Mammary epithelial cell (primary cell): ENCODE measurements at regions of chr15 and their contacts with region 1.

Region 1: GRCh38 chr15:76190834-76191538 is 120.3 kb downstream of the ETFA start:
- DNase-seq: peak; percentile 61
- H3K4me3 ChIP-seq: peak overlapping the region in 1 of 3 experiments; percentile 52
- H3K27ac ChIP-seq: no peak overlapping the region
- H3K4me1 ChIP-seq: peaks cover 8% of the 10 kb centered on the region
- H3K27me3 ChIP-seq: no peaks in the 10 kb centered on the region
- CTCF ChIP-seq: peak; percentile 85 to 93

Region 2: GRCh38 chr15:76235186-76235826 is 44.3 kb after region 1 on chr15:
- CTCF ChIA-PET with region 1: interaction called, 4 read pairs
- dilution Hi-C with region 1: no loop called
- in situ Hi-C with region 1: no loop called
- intact Hi-C with region 1: loop called (anchors 2 kb)
- DNase-seq: peak; percentile 19
- H3K4me3 ChIP-seq: no peak overlapping the region
- H3K27ac ChIP-seq: no peak overlapping the region
- H3K4me1 ChIP-seq: no peaks in the 10 kb centered on the region
- H3K27me3 ChIP-seq: no peaks in the 10 kb centered on the region
- CTCF ChIP-seq: peak; percentile 29 to 43

Region 3: DNA sequence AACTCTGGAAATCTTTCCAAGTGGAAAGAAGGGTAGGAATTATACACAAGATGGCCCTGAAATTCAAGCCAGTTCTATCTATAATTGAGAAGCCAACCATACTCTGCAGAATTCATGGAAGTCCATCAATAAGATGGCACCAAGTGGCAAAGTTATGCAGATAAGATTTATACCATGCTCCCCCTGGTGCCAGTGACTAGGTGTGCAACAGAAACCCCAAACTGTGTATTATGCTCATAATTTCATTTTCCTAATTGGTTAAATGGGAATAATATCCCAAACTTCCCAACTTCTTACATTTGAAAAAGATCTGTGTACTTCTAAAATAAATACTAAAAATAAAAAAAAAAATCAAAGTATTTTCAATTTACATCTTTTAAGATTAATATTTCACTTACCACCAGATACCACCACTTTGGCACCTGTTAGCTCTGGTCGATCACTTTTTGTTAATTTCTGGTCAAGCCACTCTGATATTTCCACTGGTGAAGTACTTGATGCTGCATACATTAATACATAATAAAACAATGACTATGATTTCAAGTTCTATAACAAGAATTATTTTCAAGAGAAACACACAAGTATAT is 94.3 kb after region 1 on chr15:
- CTCF ChIA-PET with region 1: no interaction called
- dilution Hi-C with region 1: no loop called
- in situ Hi-C with region 1: no loop called
- intact Hi-C with region 1: loop called (anchors 1 kb)
- DNase-seq: peak; percentile 5
- H3K4me3 ChIP-seq: no peak overlapping the region
- H3K27ac ChIP-seq: no peak overlapping the region
- H3K4me1 ChIP-seq: no peaks in the 10 kb centered on the region
- H3K27me3 ChIP-seq: no peaks in the 10 kb centered on the region
- CTCF ChIP-seq: peak; percentile 65 to 69

Region 4: GRCh38 chr15:76330080-76330680 is 139.2 kb after region 1 on chr15:
- CTCF ChIA-PET with region 1: interaction called, 3 read pairs
- dilution Hi-C with region 1: no loop called
- in situ Hi-C with region 1: no loop called
- intact Hi-C with region 1: loop called (anchors 1 kb)
- DNase-seq: peak; percentile 36
- H3K4me3 ChIP-seq: no peak overlapping the region
- H3K27ac ChIP-seq: no peak overlapping the region
- H3K4me1 ChIP-seq: peaks cover 2% of the 10 kb centered on the region
- H3K27me3 ChIP-seq: peaks cover 3% of the 10 kb centered on the region
- CTCF ChIP-seq: peak; percentile 46 to 63

Region 5: DNA sequence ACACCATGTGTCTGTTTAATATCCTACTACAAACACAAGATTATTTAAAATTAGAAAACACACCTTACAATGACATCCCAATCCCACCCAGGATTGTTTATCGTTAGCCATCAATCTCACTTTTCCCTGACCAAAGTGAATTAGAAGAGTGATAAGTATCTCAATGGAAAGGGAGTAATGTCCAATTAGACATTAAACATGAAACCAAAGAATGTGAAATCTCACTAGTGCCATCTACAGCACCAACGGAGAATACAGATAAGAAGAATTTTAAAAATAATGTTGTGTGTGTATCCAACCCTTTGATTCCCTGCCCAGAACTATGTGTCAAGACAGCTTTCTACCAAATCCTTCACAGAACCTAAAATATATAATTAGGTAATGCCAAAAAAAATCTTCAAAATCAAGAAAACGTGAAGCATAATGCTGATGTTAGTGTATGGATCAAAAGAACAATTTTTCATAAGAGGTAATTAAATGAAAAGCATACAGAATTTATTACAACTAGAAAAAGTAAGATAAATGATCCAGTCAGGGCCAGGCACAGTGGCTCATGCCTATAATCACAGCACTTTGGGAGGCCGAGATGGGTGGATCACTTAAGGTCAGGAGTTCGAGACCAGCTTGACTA is 650.0 kb after region 1 on chr15:
- CTCF ChIA-PET with region 1: no interaction called
- dilution Hi-C with region 1: no loop called
- in situ Hi-C with region 1: no loop called
- intact Hi-C with region 1: loop called (anchors 1 kb)
- DNase-seq: peak; percentile 21
- H3K4me3 ChIP-seq: no peak overlapping the region
- H3K27ac ChIP-seq: no peak overlapping the region
- H3K4me1 ChIP-seq: no peaks in the 10 kb centered on the region
- H3K27me3 ChIP-seq: no peaks in the 10 kb centered on the region
- CTCF ChIP-seq: peak; percentile 49 to 67

Region 6: DNA sequence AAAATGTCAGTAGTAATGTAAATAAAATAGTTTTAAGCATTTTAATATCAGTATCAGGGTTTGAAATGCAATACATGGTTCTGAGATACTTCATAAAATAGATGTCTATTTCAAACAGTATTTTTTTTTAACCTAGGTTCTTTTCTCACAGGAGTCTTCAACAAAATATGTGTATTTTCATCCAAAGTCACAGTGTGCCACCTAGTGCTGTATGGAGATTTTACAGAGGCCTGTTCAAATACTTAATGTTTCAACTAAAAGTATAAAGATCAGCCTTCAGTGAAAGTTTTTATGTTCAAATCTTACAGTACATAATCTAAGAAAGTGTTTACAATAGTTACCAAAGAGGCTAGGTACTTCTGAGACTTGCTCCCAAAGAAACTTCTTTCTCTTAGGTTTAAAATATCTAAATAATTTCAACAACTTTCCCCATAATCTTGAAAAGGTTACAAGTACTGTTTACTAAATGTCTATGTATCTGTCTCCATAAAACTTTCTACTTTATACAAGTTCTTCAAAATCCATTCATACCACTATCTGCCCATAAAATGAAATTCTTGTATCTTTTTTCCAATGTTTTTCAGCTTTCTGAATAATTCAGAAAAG is 675.8 kb after region 1 on chr15:
- CTCF ChIA-PET with region 1: no interaction called
- dilution Hi-C with region 1: no loop called
- in situ Hi-C with region 1: no loop called
- intact Hi-C with region 1: loop called (anchors 2 kb)
- DNase-seq: peak; percentile 5
- H3K4me3 ChIP-seq: no peak overlapping the region
- H3K27ac ChIP-seq: no peak overlapping the region
- H3K4me1 ChIP-seq: no peaks in the 10 kb centered on the region
- H3K27me3 ChIP-seq: no peaks in the 10 kb centered on the region
- CTCF ChIP-seq: peak; percentile 30 to 51